A549 (cell line): ENCODE measurements at regions of chr2 and their contacts with region 1.

Region 1: GRCh38 chr2:30968660-30969397 is 161.6 kb upstream of the CAPN13 start:
- DNase-seq: peak; percentile 25 to 49
- ATAC-seq: peak in 1 of 2 experiments; percentile 65; a peak in 3 of 6 replicates
- H3K4me3 ChIP-seq: no peak overlapping the region
- H3K27ac ChIP-seq: peak overlapping the region; percentile 64 to 67
- H3K4me1 ChIP-seq: peaks cover 11% of the 10 kb centered on the region
- CTCF ChIP-seq: no peak
- EP300 ChIP-seq: no peak
- POLR2A ChIP-seq: no peak
- RAD21 ChIP-seq: no peak

Region 2: DNA sequence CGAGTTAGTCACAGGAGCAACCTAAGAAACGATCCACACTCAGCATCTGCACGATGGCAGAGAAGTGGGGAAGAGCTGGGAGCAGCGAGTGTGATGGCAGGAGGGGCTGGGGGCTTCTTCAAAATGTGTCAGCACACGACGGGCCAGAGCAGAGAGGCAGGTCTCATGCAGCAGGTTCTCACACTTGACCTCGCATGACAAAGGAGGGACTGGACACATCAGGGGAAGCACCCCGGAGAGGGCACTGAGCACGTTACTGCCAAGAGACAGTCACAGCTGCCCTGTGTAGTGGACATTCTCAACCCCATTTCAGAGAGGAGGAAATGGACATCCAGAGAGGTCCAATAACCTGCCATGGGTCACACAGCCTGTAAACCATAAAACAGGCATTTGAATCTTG is 57.5 kb before region 1 on chr2:
- CTCF ChIA-PET with region 1: no interaction called
- POLR2A ChIA-PET with region 1: no interaction called
- DNase-seq: no peak
- ATAC-seq: 0 out of 6 replicates have a peak, but pooled peaks of 1 of the 2 experiments have one; percentile 24
- H3K4me3 ChIP-seq: no peak overlapping the region
- H3K27ac ChIP-seq: no peak overlapping the region
- H3K4me1 ChIP-seq: peaks cover 6% of the 10 kb centered on the region
- CTCF ChIP-seq: no peak
- EP300 ChIP-seq: no peak
- POLR2A ChIP-seq: no peak
- RAD21 ChIP-seq: no peak

Region 3: DNA sequence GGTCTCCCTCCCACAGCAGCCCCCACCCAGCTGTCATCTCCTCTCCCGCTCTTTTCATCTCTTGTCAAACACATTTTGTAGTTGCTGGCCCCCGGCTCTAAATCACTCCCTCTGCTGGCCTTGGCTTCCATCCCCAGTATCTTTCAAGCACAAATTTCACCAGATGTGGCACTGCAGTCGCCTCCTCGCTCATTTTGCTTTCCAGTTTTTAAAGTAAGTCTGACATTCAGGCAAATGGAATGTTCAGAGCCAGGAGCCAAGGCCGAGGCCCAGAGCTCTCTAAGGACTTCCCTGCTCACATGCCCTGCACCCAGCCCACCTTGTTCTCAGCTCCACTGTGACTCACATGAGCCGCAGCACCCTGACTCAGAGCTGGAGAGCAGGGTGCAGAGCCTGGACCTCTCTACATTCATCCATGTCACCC is 11.0 kb after region 1 on chr2:
- CTCF ChIA-PET with region 1: interaction called, 25 read pairs
- POLR2A ChIA-PET with region 1: no interaction called
- DNase-seq: peak; percentile 41 to 68
- ATAC-seq: peak; percentile 95 to 96
- H3K4me3 ChIP-seq: no peak overlapping the region
- H3K27ac ChIP-seq: peak overlapping the region in 1 of 2 experiments; percentile 20; a peak in 2 of 6 replicates
- H3K4me1 ChIP-seq: peaks cover 12% of the 10 kb centered on the region
- CTCF ChIP-seq: peak; percentile 37
- EP300 ChIP-seq: no peak
- POLR2A ChIP-seq: no peak
- RAD21 ChIP-seq: peak in 1 of 2 experiments; percentile 40; a peak in 1 of 5 replicates

Region 4: GRCh38 chr2:31097962-31098613 is 129.3 kb after region 1 on chr2:
- CTCF ChIA-PET with region 1: no interaction called
- POLR2A ChIA-PET with region 1: no interaction called
- DNase-seq: no peak
- ATAC-seq: no peak
- H3K4me3 ChIP-seq: no peak overlapping the region
- H3K27ac ChIP-seq: no peak overlapping the region
- H3K4me1 ChIP-seq: no peaks in the 10 kb centered on the region
- CTCF ChIP-seq: no peak
- EP300 ChIP-seq: no peak
- POLR2A ChIP-seq: no peak
- RAD21 ChIP-seq: no peak